Panc1 (cell line): ENCODE measurements at regions of chr12 and their contacts with region 1.

Region 1: DNA sequence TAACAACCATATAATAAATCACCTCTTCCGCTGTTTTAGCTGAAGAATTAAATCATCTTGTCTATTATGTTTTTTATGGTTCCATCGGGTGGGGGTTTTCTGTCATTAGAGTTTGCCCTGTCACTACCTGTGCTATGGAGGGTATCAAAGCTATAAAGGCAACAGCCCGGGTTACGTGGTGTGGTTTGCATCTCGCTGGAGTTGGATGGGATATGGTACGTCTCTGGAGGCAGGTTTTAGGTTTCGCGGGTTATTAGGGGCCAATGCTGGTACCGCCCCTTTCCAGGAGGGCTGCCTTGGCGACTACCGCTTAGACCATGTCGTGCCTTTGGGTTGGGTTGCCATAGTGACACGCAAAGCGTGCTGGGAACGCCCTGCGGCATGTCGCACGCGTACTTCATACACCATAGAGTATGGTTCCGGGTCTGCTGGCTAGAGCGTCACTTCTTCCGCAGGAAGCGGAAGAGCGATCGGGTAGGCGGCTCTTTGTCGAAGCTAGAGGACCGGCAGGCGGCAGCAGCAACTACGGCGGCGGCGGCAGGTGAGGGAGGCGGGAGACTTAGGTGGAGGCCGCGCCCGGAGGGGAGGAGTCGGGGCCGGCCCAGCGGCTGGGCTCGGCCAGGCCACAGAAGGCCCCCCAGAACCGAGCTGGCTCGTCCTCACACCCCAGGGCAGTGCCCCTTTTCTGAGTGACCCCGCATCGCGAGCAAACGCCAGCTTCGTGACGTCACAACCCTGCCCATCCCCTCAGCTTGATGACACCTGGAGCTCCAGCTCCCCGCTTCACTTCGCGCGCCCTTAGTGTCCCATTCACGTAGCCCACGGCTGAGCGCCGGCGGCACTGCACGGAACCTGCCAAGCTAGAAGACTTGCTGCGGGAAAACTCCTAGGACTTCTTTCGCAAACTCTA is at the start of gene ZC3H10:
- DNase-seq: peak; percentile 100
- ATAC-seq: peak; percentile 90
- H3K4me3 ChIP-seq: peak within 1 kb of the TSS; percentile 69 to 100
- H3K27ac ChIP-seq: peak within 1 kb of the TSS; percentile 95
- H3K4me1 ChIP-seq: peaks cover 30% of the 10 kb centered on the region
- H3K27me3 ChIP-seq: no peaks in the 10 kb centered on the region
- CTCF ChIP-seq: peak; percentile 72
- total RNA-seq, gene ZC3H10: 6.0 TPM

Region 2: DNA sequence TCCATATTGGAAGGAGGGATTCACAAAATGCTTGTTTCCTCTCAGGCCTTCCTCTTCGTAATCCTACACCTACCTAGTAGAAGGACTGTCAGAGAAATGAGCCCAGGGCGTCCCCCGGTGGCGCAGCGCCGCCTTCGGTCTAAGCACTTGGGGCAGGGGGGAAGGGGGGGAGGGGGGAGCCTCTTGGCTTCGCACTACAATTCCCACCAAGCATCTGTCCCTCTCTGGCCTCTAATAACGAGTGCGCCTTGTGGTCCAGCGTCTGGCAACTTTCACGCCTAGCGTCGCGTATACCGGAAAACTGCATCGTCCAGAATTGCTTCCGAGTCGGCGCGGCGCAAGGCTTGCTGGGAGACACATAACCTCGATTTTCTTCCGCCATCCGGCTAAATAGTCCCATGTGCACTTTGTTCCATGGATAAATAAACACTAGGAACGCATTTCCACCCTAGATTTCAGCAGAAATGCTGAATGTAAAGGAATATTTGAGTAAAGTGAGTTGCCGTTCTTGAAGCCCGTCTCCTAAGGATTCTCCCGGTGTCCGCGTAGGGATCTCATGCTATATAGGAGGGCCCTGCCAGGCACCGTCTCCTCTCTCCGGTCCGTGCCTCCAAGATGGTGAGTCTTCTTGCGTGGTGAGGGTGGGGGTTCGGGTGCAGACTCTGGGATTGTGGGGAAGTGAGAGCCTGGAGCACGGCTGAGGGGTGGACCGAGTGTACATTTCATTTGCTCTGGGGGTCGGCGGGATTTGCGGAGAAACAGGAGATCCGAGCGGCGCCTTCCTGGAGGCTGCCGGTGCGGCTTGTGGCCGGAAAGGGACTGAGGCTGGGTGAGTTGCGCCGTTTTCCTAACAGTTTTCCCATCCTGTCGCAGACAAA is 76.2 kb before region 1 on chr12 and contains the start of gene RPS26:
- CTCF ChIA-PET with region 1: no interaction called
- POLR2A ChIA-PET with region 1: no interaction called
- in situ Hi-C with region 1: no loop called
- intact Hi-C with region 1: loop called (anchors 10 kb)
- DNase-seq: peak; percentile 99
- ATAC-seq: peak; percentile 97
- H3K4me3 ChIP-seq: peak within 1 kb of the TSS; percentile 92 to 96
- H3K27ac ChIP-seq: peak within 1 kb of the TSS; percentile 100
- H3K4me1 ChIP-seq: 0 out of 2 replicates have a peak, but pooled peaks cover 6% of the 10 kb centered on the region
- H3K27me3 ChIP-seq: no peaks in the 10 kb centered on the region
- CTCF ChIP-seq: peak; percentile 89
- total RNA-seq, gene RPS26: 46.4 TPM

Region 3: GRCh38 chr12:56127888-56128669 is 10.0 kb after region 1 on chr12 and contains the start of gene ESYT1:
- CTCF ChIA-PET with region 1: interaction called, 14 read pairs
- POLR2A ChIA-PET with region 1: interaction called, 6 read pairs
- in situ Hi-C with region 1: no loop called
- intact Hi-C with region 1: no loop called
- DNase-seq: peak; percentile 99
- ATAC-seq: peak; percentile 96
- H3K4me3 ChIP-seq: peak within 1 kb of the TSS; percentile 93 to 96
- H3K27ac ChIP-seq: peak within 1 kb of the TSS; percentile 94
- H3K4me1 ChIP-seq: peaks cover 29% of the 10 kb centered on the region
- H3K27me3 ChIP-seq: no peaks in the 10 kb centered on the region
- CTCF ChIP-seq: no peak
- total RNA-seq, gene ESYT1: 152 TPM

Region 4: GRCh38 chr12:56158029-56158925 is 40.2 kb after region 1 on chr12 and contains the start of gene MYL6:
- CTCF ChIA-PET with region 1: interaction called, 8 read pairs
- POLR2A ChIA-PET with region 1: interaction called, 5 read pairs
- in situ Hi-C with region 1: no loop called
- intact Hi-C with region 1: loop called (anchors 5 kb)
- DNase-seq: peak; percentile 86
- ATAC-seq: peak; percentile 89
- H3K4me3 ChIP-seq: peak within 1 kb of the TSS; percentile 74 to 78
- H3K27ac ChIP-seq: peak within 1 kb of the TSS; percentile 92
- H3K4me1 ChIP-seq: peaks cover 32% of the 10 kb centered on the region
- H3K27me3 ChIP-seq: no peaks in the 10 kb centered on the region
- CTCF ChIP-seq: no peak
- total RNA-seq, gene MYL6: 1,024 TPM

Region 5: DNA sequence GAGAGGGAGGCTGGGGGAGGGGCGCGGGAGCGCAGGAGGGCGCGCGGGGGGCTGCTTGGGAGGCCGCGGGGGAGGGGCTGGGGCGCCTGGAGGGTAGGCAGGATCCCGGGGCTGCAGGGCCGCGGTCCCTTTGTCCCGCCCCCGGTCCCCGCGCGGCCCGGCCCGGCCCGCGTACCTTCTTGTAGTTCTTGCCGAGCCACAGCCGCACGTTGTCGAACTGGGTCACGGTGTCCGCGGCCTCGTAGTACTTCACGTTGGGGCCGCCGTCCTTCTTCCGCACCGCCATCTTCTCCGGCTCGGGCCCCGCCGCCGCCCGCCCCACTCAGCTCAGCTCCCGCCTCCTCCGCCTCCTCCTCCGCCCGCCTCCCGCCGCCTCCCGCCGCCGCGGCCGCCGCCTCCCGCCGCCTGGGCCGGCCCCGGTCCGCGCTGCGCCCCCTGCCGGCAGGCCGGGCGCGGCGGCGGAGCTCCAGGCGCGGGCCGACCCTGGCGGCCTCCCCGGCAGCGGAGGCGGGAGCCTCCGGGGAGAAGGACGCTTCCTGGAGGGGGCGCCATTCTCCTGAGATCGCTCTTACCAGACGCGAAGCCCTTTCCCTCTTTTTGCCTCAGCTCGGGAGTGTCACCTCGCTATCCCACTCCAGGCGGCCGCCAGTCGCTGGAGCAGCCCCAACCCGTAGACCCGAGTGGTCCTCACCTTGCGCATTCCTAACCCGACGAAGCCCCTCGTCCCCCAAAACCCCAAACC is 71.3 kb after region 1 on chr12 and contains the start of gene SMARCC2:
- CTCF ChIA-PET with region 1: interaction called, 7 read pairs
- POLR2A ChIA-PET with region 1: interaction called, 7 read pairs
- in situ Hi-C with region 1: no loop called
- intact Hi-C with region 1: loop called (anchors 1 kb)
- DNase-seq: peak; percentile 64
- ATAC-seq: peak; percentile 91
- H3K4me3 ChIP-seq: peak within 1 kb of the TSS; percentile 77 to 98
- H3K27ac ChIP-seq: peak within 1 kb of the TSS; percentile 95
- H3K4me1 ChIP-seq: peaks cover 12% of the 10 kb centered on the region
- H3K27me3 ChIP-seq: no peaks in the 10 kb centered on the region
- CTCF ChIP-seq: peak; percentile 99
- total RNA-seq, gene SMARCC2: 129 TPM